ENCODE measurements at regions of chr11 and their contacts with region 1.

Region 1: GRCh38 chr11:27472398-27473016 is at the start of gene LGR4:
- DNase-seq: peak; percentile 95
- ATAC-seq: peak; percentile 79
- H3K4me3 ChIP-seq: peak within 1 kb of the TSS; percentile 81
- H3K27ac ChIP-seq: peak within 1 kb of the TSS; percentile 27; the same call in 1 of the 2 replicates
- H3K4me1 ChIP-seq: peaks cover 36% of the 10 kb centered on the region
- H3K27me3 ChIP-seq: no peaks in the 10 kb centered on the region
- CTCF ChIP-seq: no peak
- total RNA-seq, gene LGR4: 13.5 and 14.5 TPM in 2 replicates

Region 2: DNA sequence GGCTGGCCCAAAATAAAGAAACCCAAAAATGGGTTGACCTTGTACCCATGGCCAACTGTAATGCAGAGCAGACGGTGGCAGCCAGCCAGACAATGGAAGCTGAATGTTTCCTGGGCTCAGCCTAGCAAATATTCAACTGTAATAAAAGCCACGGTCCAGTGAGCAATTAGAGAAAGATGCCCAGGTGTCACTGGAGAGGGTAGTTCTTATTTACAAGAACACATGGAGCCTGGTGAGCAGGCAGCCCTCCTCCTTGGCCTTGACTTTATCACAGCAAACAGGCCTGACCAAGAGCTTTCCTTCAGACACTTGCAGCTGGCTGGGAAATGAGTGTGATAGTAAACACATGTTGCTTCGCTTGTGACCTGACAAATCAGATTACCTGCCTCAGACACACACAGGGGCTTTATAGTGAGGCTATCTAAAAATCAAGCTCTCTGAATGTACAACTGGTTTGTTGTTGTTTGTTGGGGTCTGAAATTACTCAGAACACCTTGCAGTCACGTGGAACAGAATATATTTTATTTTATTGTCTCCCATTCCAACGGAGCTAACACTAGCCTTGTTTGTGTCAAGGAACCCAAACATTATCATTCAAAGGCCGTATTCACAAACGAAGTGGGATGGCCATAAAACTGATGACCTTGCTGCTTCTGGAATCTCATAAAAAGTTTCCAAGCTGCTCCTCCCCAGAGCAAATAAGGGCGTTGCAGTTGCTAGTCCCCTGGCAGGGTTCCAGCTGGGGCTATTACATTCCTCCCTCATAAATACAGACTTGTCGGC is 270.9 kb before region 1 on chr11:
- CTCF ChIA-PET with region 1: no interaction called
- POLR2A ChIA-PET with region 1: no interaction called
- intact Hi-C with region 1: loop called (anchors 1 kb)
- DNase-seq: peak; percentile 96
- ATAC-seq: peak; percentile 80
- H3K4me3 ChIP-seq: peak overlapping the region; percentile 22; the same call in 1 of the 2 replicates
- H3K27ac ChIP-seq: peak overlapping the region; percentile 91
- H3K4me1 ChIP-seq: peaks cover 36% of the 10 kb centered on the region
- H3K27me3 ChIP-seq: no peaks in the 10 kb centered on the region
- CTCF ChIP-seq: no peak

Region 3: DNA sequence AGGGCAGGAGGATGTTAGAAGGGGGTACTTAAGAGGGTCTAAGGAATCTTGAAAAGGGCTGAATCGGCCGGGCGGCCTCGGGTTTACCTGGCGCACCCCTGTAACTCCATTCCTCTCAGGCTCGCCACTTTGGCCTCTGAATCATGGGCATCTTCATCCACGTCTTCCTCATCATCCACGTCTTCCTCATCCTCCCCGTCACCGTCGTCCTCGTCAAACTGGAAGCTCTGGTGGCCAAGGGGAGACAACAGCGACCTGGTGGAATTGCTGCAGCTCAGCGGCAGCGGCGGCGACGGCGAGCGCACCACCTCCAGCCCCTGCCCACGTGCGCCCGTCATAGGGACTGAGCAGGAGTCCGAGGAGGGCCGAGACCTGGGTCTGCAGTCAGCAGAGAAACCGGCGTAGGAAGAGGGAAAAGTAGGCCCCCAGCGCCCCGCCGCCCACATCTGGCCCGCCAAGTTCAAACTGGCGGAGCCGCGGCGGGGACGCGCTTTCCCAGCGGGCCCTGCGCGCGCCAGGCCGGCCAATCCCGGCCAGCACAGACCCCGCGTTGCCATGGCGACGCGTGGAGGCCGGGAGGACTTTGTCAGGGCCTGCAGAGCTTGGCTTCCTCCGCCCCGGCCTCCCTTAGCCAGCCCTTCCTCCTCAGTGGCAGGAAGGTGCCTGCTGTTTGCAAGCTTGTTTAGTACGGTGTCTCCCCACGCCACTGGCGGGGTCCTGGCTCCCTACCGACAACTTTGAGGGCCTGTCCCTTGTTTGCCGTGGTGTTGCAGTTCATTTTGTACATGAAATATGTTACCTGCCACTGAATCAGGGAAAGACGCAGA is 109.5 kb before region 1 on chr11 and contains the start of gene CCDC34:
- CTCF ChIA-PET with region 1: interaction called, 3 read pairs
- POLR2A ChIA-PET with region 1: no interaction called
- intact Hi-C with region 1: loop called (anchors 1 kb)
- DNase-seq: peak; percentile 93
- ATAC-seq: peak; percentile 92
- H3K4me3 ChIP-seq: peak within 1 kb of the TSS; percentile 97
- H3K27ac ChIP-seq: peak within 1 kb of the TSS; percentile 40
- H3K4me1 ChIP-seq: peaks cover 23% of the 10 kb centered on the region
- H3K27me3 ChIP-seq: no peaks in the 10 kb centered on the region
- CTCF ChIP-seq: no peak
- total RNA-seq, gene CCDC34: 9.0 and 11.0 TPM in 2 replicates

Region 4: GRCh38 chr11:27392278-27393114 is 80.0 kb before region 1 on chr11:
- CTCF ChIA-PET with region 1: interaction called, 4 read pairs
- POLR2A ChIA-PET with region 1: interaction called, 12 read pairs
- intact Hi-C with region 1: loop called (anchors 1 kb)
- DNase-seq: peak; percentile 74
- ATAC-seq: peak; percentile 60
- H3K4me3 ChIP-seq: no peak overlapping the region
- H3K27ac ChIP-seq: peak overlapping the region; percentile 71
- H3K4me1 ChIP-seq: peaks cover 55% of the 10 kb centered on the region
- H3K27me3 ChIP-seq: no peaks in the 10 kb centered on the region
- CTCF ChIP-seq: no peak

Region 5: DNA sequence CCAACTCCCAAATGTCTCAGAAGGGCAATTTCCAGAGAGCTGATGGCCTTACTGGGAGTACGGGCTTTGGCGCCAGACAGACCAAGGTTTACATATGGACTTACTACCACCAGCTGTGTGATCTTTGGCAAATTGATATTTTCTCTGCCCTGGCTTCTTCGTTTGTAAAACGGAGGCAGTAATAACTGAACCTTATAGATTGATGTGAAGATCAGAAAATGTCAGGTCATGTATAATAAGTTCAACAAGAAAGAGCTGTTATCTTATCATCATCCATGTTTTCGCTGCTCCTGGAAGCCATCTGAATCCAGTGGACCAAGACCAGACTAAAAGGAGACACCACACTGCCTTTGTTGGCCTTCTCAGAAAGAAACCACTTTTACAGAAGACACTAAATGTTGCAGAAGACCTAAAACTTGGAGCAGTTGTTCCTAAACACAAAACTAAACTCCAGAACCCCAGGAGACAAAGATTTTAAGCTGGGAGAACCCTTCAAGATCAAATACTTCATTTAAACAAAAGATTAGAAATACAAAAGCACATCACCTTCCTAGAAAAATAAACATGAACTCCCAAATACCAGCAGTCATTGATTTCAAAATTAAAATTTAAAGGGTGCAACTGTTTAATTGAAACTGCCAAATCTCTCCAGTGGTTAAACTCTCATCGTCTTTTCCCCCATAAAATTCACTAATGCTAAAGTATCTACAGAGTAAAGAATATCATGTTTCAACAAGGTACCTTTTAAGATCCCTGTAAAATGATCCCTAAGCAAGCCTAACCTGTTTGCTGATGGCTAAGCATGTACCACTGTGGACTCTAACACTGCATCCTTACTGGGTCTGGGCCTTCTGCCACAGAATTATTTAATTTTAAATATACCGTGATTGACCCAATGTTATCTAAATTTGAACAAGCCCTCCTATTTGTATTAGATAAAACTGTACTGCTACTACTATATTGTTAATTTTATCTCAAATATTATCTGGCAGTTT is 56.0 kb before region 1 on chr11:
- CTCF ChIA-PET with region 1: interaction called, 11 read pairs
- POLR2A ChIA-PET with region 1: no interaction called
- intact Hi-C with region 1: no loop called
- DNase-seq: peak; percentile 75
- ATAC-seq: peak; percentile 97
- H3K4me3 ChIP-seq: no peak overlapping the region; the same call in 1 of the 2 replicates
- H3K27ac ChIP-seq: peak overlapping the region; percentile 63
- H3K4me1 ChIP-seq: peaks cover 37% of the 10 kb centered on the region
- H3K27me3 ChIP-seq: no peaks in the 10 kb centered on the region
- CTCF ChIP-seq: no peak

Region 6: DNA sequence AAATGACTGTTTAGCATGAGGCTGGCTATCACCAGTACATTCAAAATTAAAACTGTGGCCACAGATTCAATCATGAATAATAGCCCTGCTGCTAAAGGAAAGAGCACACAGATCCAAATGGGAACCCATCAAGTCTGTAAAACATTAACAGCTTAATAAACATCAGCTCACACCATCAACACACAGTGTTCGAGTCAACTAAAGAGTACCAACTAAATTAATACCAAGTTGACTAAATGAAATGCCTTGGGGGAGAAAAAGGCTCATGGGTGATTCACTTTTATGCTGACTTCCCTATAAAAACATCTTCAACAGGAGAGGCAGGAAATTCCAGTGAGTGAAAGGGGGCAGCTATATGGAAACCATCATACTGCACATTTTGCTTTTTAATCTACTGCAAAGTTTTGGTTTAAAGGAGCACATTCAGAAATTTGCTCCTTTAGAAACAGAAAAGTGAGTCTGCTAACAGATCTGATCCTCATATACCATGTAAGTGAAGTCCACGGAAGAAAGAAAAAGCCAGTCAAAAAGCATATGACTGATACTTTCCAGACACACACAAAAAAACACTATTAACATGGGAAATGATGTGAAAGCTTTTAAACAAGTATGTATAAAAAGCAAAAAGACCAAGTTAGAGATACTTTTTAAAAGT is 16.2 kb before region 1 on chr11:
- CTCF ChIA-PET with region 1: no interaction called
- POLR2A ChIA-PET with region 1: interaction called, 11 read pairs
- intact Hi-C with region 1: no loop called
- DNase-seq: peak; percentile 75
- ATAC-seq: peak; percentile 72
- H3K4me3 ChIP-seq: peak overlapping the region; percentile 37; the same call in 1 of the 2 replicates
- H3K27ac ChIP-seq: peak overlapping the region; percentile 69
- H3K4me1 ChIP-seq: peaks cover 46% of the 10 kb centered on the region
- H3K27me3 ChIP-seq: no peaks in the 10 kb centered on the region
- CTCF ChIP-seq: no peak

Region 7: DNA sequence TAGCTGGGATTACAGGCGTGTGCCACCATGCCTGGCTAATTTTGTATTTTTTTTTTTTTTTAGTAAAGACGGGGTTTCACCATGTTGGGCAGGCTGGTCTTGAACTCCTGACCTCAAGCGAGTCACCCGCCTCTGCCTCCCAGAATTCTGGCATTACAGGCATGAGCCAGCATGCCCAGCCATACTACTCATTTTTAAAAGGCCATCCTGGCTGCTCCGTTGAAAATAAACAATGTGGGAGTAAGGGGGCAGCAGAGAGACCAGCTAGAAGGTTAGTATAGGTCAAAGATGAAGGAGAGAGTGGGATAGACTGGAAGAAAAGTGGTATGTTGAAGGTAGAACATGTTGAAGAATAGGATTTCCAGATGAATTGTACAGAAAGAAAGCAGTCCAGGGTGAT is 51.6 kb after region 1 on chr11:
- CTCF ChIA-PET with region 1: no interaction called
- POLR2A ChIA-PET with region 1: no interaction called
- intact Hi-C with region 1: no loop called
- DNase-seq: peak; percentile 35
- ATAC-seq: no peak; the same call in 1 of the 2 replicates
- H3K4me3 ChIP-seq: no peak overlapping the region
- H3K27ac ChIP-seq: no peak overlapping the region
- H3K4me1 ChIP-seq: no peaks in the 10 kb centered on the region
- H3K27me3 ChIP-seq: no peaks in the 10 kb centered on the region
- CTCF ChIP-seq: peak; percentile 39

Region 8: GRCh38 chr11:27545946-27546345 is 73.4 kb after region 1 on chr11:
- CTCF ChIA-PET with region 1: no interaction called
- POLR2A ChIA-PET with region 1: no interaction called
- intact Hi-C with region 1: no loop called
- DNase-seq: no peak
- ATAC-seq: no peak
- H3K4me3 ChIP-seq: no peak overlapping the region
- H3K27ac ChIP-seq: no peak overlapping the region
- H3K4me1 ChIP-seq: no peaks in the 10 kb centered on the region
- H3K27me3 ChIP-seq: no peaks in the 10 kb centered on the region
- CTCF ChIP-seq: no peak

Measured in PC-3 (cell line).